Activated B cell treated with CpG ODN at 0.5 μM for 24 hours (primary cell): ENCODE measurements at regions of chr14 and their contacts with region 1.

Region 1: GRCh38 chr14:91396959-91397815 is 20.4 kb downstream of the CCDC88C start:
- DNase-seq: no peak
- ATAC-seq: peak; percentile 56
- H3K4me3 Mint-ChIP-seq: peak overlapping the region; percentile 66
- H3K27ac Mint-ChIP-seq: peak overlapping the region; percentile 79
- H3K4me1 Mint-ChIP-seq: peaks cover 91% of the 10 kb centered on the region
- H3K27me3 Mint-ChIP-seq: no peaks in the 10 kb centered on the region
- CTCF ChIP-seq: no peak

Region 2: DNA sequence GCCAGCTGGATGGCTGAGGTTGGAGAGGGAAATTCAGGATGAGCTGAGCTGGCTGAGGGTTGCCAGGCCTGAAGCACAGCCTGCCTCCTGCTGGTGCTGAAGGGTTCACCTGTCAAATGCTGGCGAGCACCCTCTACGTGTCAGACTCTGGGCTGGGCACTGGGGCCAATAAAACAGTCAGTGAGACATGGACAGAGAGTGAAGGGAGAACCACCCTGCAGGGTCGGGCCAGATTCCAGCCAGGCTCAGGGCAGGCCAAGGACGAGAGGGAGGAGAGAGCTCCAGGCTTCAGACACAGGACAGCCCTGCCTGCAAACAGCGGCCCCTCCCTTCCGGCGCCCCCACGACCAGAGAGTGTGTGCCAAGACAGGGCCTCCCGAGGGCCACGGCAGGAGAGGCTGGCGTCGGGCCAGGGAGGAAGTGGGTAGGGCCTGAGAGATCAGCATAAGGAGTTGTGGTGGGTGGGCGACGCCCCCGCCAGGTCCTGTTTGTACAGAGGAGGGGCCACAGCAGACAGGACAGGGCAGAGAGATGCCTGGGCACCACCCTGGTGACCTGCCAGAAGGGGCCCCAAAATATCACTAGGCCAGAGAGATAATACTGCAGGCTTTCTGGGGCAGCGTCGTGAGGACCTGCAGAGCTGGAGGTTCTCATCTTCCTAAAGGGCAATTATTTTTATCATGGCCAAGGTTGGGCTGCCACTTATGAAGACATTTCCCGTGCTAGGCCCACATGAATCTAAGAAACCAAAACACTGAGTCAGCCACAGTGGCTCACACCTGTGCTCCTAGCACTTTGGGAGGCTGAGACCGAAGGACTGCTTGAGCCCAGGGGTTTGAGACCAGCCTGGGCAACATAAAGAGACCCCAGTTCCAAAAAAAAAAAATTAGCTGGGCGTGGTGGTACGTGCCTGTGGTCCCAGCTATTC is 79.5 kb before region 1 on chr14:
- CTCF ChIA-PET with region 1: interaction called, 5 read pairs
- POLR2A ChIA-PET with region 1: interaction called, 10 read pairs
- intact Hi-C with region 1: no loop called
- DNase-seq: peak; percentile 62
- ATAC-seq: peak; percentile 32
- H3K4me3 Mint-ChIP-seq: peak overlapping the region; percentile 70
- H3K27ac Mint-ChIP-seq: peak overlapping the region; percentile 98
- H3K4me1 Mint-ChIP-seq: peaks cover 78% of the 10 kb centered on the region
- H3K27me3 Mint-ChIP-seq: no peaks in the 10 kb centered on the region
- CTCF ChIP-seq: no peak

Region 3: GRCh38 chr14:91350813-91351511 is 46.2 kb before region 1 on chr14:
- CTCF ChIA-PET with region 1: interaction called, 6 read pairs
- POLR2A ChIA-PET with region 1: interaction called, 19 read pairs
- intact Hi-C with region 1: no loop called
- DNase-seq: no peak
- ATAC-seq: peak; percentile 60
- H3K4me3 Mint-ChIP-seq: peak overlapping the region; percentile 81
- H3K27ac Mint-ChIP-seq: peak overlapping the region; percentile 85
- H3K4me1 Mint-ChIP-seq: peaks cover 93% of the 10 kb centered on the region
- H3K27me3 Mint-ChIP-seq: no peaks in the 10 kb centered on the region
- CTCF ChIP-seq: no peak

Region 4: GRCh38 chr14:91380610-91381371 is 16.4 kb before region 1 on chr14:
- CTCF ChIA-PET with region 1: interaction called, 4 read pairs
- POLR2A ChIA-PET with region 1: interaction called, 5 read pairs
- intact Hi-C with region 1: loop called (anchors 1 kb)
- DNase-seq: no peak
- ATAC-seq: peak; percentile 34
- H3K4me3 Mint-ChIP-seq: peak overlapping the region; percentile 0
- H3K27ac Mint-ChIP-seq: peak overlapping the region; percentile 63
- H3K4me1 Mint-ChIP-seq: peaks cover 92% of the 10 kb centered on the region
- H3K27me3 Mint-ChIP-seq: no peaks in the 10 kb centered on the region
- CTCF ChIP-seq: no peak

Region 5: DNA sequence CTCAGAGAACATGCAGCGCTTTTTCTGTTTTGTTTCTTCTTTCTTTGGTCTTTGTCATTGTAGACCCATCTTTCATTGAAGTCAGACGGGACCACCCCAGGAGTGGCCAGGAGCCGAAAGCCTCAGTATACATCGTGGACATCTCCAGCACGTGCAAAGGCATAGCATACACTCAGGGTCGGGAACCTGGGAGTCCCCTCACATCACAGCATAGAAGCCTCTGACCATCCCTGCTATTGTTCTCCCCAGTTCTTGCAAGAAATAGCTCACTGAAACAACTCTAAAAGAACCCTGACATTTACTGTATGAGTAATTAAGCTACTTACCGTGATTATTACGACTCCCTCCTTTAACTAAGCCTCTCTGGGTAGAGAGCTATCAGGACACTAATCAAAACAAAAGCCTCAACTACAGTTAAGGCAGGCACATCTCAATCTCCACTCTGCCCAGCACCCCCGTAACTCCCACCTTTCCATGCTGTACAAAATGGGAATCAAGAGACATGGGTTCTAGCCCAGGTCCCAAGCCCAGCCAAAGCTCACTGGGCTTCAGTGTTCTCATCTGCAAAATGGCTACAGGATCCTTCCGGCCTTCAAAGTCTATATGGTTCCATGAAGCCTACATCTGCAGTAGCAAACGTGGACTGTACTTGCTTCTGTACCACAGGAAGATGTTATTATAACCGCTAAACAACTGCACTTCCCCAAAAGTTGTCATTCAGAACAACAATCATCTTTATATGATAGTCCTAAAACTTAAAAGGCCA is 13.8 kb after region 1 on chr14:
- CTCF ChIA-PET with region 1: interaction called, 29 read pairs
- POLR2A ChIA-PET with region 1: interaction called, 129 read pairs
- intact Hi-C with region 1: loop called (anchors 1 kb)
- DNase-seq: no peak
- ATAC-seq: no peak
- H3K4me3 Mint-ChIP-seq: peak overlapping the region; percentile 76
- H3K27ac Mint-ChIP-seq: peak overlapping the region; percentile 93
- H3K4me1 Mint-ChIP-seq: peaks cover 89% of the 10 kb centered on the region
- H3K27me3 Mint-ChIP-seq: no peaks in the 10 kb centered on the region
- CTCF ChIP-seq: no peak

Region 6: GRCh38 chr14:91418387-91419043 is 21.3 kb after region 1 on chr14:
- CTCF ChIA-PET with region 1: interaction called, 29 read pairs
- POLR2A ChIA-PET with region 1: interaction called, 129 read pairs
- intact Hi-C with region 1: loop called (anchors 1 kb)
- DNase-seq: peak; percentile 84
- ATAC-seq: peak; percentile 37
- H3K4me3 Mint-ChIP-seq: peak overlapping the region; percentile 81
- H3K27ac Mint-ChIP-seq: peak overlapping the region; percentile 93
- H3K4me1 Mint-ChIP-seq: peaks cover 42% of the 10 kb centered on the region
- H3K27me3 Mint-ChIP-seq: no peaks in the 10 kb centered on the region
- CTCF ChIP-seq: peak; percentile 36